Aorta (tissue), 5 donors: ENCODE measurements at regions of chr3 and their contacts with region 1.

Region 1: DNA sequence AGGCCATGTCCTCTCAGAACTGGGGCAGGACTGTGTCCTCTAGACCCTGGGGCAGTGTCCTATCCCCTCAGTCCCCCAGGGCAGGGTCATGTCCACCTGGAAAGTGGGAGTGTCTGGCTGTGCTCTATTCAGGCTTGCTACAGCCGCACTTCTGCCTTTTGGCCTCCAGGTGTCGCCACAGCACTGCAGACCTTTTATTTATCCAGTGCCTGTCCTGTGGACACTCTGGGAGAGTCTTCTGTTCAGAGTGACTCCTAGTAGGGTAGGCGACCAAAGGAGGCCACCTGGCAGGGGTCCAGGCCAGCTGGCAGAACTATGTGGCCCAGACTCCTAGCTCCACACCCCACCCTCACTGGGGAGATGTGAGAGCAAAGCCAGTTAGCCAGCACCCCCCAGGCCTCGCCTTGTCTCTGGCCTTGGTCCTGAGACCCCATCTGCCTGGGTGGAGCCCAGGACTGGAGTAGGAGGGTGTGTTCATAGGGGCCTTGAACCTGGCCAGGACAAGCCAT is 3.9 kb downstream of the TMIE start:
- DNase-seq: peak; percentile 78 to 89
- ATAC-seq: peak; percentile 83
- H3K4me3 ChIP-seq: no peak overlapping the region
- H3K27ac ChIP-seq: no peak overlapping the region
- H3K4me1 ChIP-seq: no peaks in the 10 kb centered on the region
- H3K27me3 ChIP-seq: no peaks in the 10 kb centered on the region

Region 2: GRCh38 chr3:46845791-46846623 is 140.9 kb after region 1 on chr3:
- intact Hi-C with region 1: loop called in 1 of 2 experiments (anchors 5 kb)
- DNase-seq: peak; percentile 84 to 94
- ATAC-seq: peak; percentile 89
- H3K4me3 ChIP-seq: peak overlapping the region; percentile 49 to 56
- H3K27ac ChIP-seq: peak overlapping the region in 1 of 2 donors; percentile 8
- H3K4me1 ChIP-seq: no peaks in the 10 kb centered on the region
- H3K27me3 ChIP-seq: no peaks in the 10 kb centered on the region

Region 3: GRCh38 chr3:46860017-46860830 is 155.1 kb after region 1 on chr3:
- intact Hi-C with region 1: loop called in 1 of 2 experiments (anchors 5 kb)
- DNase-seq: peak; percentile 49 to 70
- ATAC-seq: no peak
- H3K4me3 ChIP-seq: no peak overlapping the region
- H3K27ac ChIP-seq: no peak overlapping the region
- H3K4me1 ChIP-seq: no peaks in the 10 kb centered on the region
- H3K27me3 ChIP-seq: no peaks in the 10 kb centered on the region

Region 4: DNA sequence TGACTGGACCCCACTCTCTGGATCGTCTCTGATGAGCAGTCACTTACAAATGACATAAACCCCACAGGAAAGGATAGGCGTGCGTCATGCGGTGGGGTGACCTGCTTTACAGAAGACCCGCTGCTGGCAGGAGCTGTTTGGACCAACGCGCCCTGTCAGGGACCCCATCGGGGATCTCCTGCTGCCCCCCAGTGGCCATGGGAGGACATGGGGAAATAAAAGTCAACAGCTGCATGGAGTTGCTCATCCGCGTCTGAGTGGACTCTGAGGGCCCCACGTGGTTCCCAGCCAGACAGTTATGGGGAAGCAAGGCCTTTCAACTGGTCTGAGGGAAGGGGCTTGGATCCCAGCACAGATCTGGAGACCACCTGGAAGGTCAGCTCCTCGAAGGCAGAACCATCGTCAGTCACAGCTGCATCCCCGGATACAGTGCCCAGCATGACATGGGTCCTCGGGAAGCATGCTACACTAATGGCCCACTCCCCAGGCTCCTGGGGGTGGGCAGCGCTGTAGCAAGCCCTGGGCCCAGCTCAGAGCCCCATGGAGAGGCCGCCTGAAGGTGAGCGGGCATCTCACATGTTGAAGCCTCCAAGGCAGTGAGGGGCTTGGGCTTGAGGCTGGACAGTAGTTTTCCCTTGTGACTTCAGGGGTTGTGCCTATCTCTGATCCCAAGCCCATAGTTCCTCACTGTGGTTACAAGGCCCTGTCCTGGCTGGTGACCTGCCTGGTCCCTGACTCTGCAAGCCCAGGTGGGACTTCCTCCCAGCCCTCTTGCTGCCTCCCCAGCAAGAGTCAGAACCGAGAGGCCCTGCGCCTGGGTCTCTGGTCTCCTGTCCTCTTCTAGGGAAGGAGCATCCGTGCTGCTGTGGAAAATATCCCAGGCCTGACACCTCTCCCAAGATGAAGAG is 204.7 kb after region 1 on chr3:
- intact Hi-C with region 1: loop called (anchors 1 kb)
- DNase-seq: peak; percentile 92 to 94
- ATAC-seq: peak; percentile 77
- H3K4me3 ChIP-seq: no peak overlapping the region
- H3K27ac ChIP-seq: no peak overlapping the region
- H3K4me1 ChIP-seq: no peaks in the 10 kb centered on the region
- H3K27me3 ChIP-seq: no peaks in the 10 kb centered on the region

Region 5: GRCh38 chr3:47009225-47010110 is 304.4 kb after region 1 on chr3:
- intact Hi-C with region 1: loop called (anchors 10 kb)
- DNase-seq: peak; percentile 94 to 95
- ATAC-seq: peak; percentile 95
- H3K4me3 ChIP-seq: peak overlapping the region; percentile 7 to 12
- H3K27ac ChIP-seq: peak overlapping the region in 1 of 2 donors; percentile 83
- H3K4me1 ChIP-seq: no peaks in the 10 kb centered on the region
- H3K27me3 ChIP-seq: no peaks in the 10 kb centered on the region

Region 6: DNA sequence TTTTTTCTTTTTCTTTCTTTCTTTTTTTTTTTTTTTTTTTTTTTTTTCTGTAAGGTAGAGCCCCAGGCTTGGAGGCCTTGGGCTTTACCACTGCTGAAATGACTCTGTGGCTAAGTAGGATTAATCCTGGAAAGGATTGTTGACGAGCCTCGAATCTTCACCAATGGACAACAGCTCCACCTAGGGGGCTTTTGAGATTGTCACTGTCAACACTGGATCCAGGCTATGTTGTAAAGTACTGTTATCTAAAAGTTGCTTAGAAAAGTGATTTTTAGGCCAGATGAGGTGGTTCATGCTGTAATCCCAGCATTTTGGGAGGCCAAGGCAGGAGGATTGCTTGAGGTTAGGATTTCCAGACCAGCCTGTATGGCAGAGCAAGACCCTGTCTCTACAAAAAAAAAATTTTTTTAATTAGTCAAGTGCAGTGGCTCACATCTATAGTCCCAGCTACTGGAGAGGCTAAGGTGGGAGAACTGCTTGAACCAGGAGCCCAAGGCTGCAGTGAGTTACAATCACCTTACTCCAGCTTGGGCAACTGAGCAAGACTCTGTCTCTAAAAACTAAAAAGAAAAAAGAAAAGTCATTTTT is 619.3 kb after region 1 on chr3:
- intact Hi-C with region 1: loop called in 1 of 2 experiments (anchors 5 kb)
- DNase-seq: peak in 1 of 2 donors; percentile 51
- ATAC-seq: peak; percentile 91
- H3K4me3 ChIP-seq: no peak overlapping the region
- H3K27ac ChIP-seq: no peak overlapping the region
- H3K4me1 ChIP-seq: no peaks in the 10 kb centered on the region
- H3K27me3 ChIP-seq: no peaks in the 10 kb centered on the region